Cardiac septum (tissue), 1 donor: ENCODE measurements at regions of chr15 and their contacts with region 1.

Region 1: GRCh38 chr15:101008158-101009139 is 89.3 kb downstream of the LRRK1 start:
- DNase-seq: peak; percentile 93

Region 2: DNA sequence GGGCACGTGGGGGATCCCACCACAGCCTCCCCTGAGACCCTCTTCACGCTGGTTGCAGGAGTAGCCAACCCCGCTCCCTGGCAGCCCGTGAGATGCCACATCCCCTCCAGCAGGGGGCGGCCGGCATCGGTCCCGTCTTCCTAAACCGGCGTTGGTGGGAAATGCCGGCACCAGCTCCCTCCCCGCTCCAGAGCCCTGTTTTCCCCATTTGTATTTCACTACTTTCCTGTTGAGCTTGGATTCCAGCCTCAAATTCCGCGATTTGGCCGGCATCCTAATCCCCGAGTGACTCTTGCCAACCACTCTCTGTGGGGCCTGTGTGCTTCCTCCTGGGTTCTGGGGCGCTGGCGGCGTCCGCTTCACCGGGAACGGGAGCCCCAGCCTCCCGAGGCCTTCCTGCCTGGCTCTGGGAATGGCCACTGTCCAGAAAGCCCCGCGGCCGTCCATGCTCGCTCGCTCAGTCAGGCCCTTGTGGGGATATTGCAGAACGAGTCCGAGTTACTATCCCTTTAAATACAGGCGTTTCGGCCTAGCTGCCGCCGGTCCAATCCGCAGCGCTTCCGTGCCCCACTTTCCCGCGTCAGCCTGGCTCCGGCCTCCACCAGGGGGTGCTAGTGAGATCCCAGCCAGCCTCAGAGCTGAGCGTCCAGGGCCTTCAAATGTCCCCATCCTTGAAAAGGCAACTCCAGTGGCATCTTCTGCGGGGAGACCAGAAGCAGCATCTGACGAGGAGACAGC is 658.6 kb before region 1 on chr15:
- intact Hi-C with region 1: loop called (anchors 10 kb)
- DNase-seq: peak; percentile 97

Region 3: GRCh38 chr15:100627789-100628395 is 380.6 kb before region 1 on chr15:
- intact Hi-C with region 1: loop called (anchors 2 kb)
- DNase-seq: no peak

Region 4: GRCh38 chr15:100671858-100672543 is 336.4 kb before region 1 on chr15:
- intact Hi-C with region 1: no loop called
- DNase-seq: no peak

Region 5: GRCh38 chr15:100918034-100918689 is 90.3 kb before region 1 on chr15:
- intact Hi-C with region 1: loop called (anchors 1 kb)
- DNase-seq: peak; percentile 93

Region 6: DNA sequence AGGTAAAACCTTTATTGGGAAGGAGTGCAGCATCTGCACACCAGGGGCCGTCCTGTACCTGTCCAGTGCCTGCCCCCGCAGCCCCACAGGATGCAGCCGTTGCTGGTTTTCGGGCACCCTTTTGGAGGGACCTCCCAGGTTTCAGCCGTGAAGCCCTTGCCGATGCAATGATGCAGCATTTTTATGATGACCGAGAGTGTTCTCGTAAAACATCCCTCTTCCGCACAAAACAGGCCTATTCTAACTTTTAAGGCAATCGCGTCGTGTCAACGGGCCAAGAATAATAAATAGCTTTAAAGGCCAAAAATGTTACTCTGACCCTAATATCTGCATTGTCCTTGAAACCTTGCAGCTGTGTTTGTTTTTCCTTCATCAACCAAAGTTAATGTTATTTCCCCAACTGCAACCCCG is 36.8 kb after region 1 on chr15:
- intact Hi-C with region 1: no loop called
- DNase-seq: peak; percentile 71

Region 7: DNA sequence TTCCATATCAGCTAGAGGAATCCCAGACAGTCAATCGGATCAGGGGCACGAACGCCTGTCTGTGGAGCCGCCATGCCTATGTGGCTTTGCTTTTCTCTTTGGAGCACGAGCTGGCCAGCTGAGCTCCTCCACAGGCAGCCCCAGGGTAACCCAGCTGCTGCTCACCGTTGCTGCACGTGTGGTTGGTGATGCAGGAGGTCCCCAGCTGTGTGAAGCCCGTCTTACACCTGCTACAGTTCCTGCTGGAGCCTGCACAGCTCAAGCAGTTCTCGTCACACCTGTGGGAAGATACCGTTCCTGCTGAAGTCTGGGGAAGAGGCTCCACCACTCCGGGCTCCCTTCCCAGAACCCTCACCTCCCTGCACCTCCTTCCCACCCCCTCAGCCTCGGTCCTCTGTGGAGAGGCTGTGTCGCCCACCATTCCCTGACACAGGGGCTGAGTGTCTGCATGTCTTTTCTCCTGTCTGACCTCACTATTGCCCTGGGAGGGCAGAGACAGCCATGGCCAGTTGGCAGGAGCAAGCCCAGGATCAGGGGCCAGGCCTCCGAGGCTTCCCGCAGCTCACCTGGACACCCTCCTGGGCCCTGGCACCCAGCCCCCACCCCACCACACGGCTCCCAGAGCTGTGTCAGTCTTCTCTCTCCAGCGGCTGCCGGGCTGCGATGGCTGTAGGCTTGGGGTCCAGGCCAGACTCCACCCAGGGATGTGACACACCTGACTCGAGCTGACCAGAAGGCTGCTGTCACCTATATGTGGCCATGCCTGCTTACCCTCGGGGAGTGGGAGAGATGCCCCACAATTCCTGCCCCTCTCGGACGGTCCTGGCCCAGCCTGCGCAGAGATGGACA is 298.8 kb after region 1 on chr15:
- intact Hi-C with region 1: no loop called
- DNase-seq: peak; percentile 57